Activated naive CD4-positive, alpha-beta T cell treated with anti-CD3 and anti-CD28 coated beads for 36 hours (primary cell): ENCODE measurements at regions of chr7 and their contacts with region 1.

Region 1: DNA sequence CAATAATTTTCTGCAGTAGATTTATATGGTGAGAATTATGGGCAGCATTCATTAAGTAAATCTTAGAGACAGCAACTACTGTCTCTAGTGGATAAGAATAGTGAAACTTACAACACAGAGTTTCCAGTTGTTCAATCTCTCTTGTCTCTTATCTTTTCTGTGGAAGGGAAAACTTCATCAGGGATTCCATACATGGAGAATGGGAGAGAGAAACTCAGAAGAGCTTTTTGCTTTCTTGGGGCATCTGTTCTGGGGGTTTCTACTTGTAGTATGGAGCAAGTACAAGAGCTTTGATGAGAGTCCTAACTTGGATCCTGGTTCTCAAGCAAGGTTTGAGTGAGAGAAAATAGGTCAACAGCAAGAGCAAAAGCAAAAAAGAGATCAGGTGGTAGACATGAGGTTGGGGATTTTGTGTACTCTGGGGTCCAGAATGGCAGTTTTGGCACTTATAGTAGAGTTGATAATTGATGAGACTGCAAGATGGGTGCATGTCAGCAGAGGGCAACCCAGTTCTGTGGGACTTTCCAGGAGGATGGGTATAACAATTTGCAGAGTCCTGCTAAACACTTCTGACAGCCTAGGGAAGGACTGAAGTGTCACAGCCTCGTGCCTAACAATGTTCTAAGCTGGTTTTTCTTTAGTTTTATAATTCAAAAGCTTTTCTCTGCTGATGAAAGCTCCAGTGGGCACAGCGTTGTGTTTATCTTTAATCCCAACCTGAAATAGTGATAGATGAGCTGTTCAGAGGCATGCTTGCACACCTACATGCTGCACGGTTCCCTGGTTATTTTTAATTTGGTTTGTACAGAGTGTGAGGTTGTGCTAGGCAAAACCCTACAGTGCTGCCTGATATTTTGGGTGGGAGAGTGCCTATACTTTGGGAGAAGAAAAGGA is 32.0 kb upstream of the STRIP2 start:
- DNase-seq: peak; percentile 74
- H3K4me3 Mint-ChIP-seq: no peak overlapping the region
- H3K27ac Mint-ChIP-seq: no peak overlapping the region
- H3K4me1 Mint-ChIP-seq: peaks cover 36% of the 10 kb centered on the region
- H3K27me3 Mint-ChIP-seq: no peaks in the 10 kb centered on the region

Region 2: GRCh38 chr7:129468087-129468486 is 65.9 kb after region 1 on chr7:
- CTCF ChIA-PET with region 1: interaction called, 32 read pairs
- intact Hi-C with region 1: loop called (anchors 1 kb)
- DNase-seq: no peak
- H3K4me3 Mint-ChIP-seq: no peak overlapping the region
- H3K27ac Mint-ChIP-seq: no peak overlapping the region
- H3K4me1 Mint-ChIP-seq: peaks cover 12% of the 10 kb centered on the region
- H3K27me3 Mint-ChIP-seq: no peaks in the 10 kb centered on the region

Region 3: GRCh38 chr7:129644634-129645230 is 242.5 kb after region 1 on chr7:
- CTCF ChIA-PET with region 1: no interaction called
- intact Hi-C with region 1: loop called (anchors 1 kb)
- DNase-seq: no peak
- H3K4me3 Mint-ChIP-seq: no peak overlapping the region
- H3K27ac Mint-ChIP-seq: no peak overlapping the region
- H3K4me1 Mint-ChIP-seq: peaks cover 24% of the 10 kb centered on the region
- H3K27me3 Mint-ChIP-seq: no peaks in the 10 kb centered on the region